Right lobe of liver (tissue), 6 donors: ENCODE measurements at regions of chr22 and their contacts with region 1.

Region 1: GRCh38 chr22:46090036-46090591 is 60.2 kb upstream of the PPARA start:
- DNase-seq: peak; percentile 70 to 85 (median 84)
- ATAC-seq: peak; percentile 30 to 55 (median 36)
- H3K4me3 ChIP-seq: no peak overlapping the region
- H3K27ac ChIP-seq: peak overlapping the region; percentile 79 to 87 (median 81)
- H3K4me1 ChIP-seq: peaks cover 0 to 56% (median 31%) of the 10 kb centered on the region in 4 donors
- H3K27me3 ChIP-seq: no peaks in the 10 kb centered on the region
- CTCF ChIP-seq: no peak
- POLR2A ChIP-seq: no peak

Region 2: GRCh38 chr22:46027192-46028105 is 62.7 kb before region 1 on chr22:
- intact Hi-C with region 1: loop called in 1 of 2 experiments (anchors 10 kb)
- DNase-seq: peak; percentile 80 to 85 (median 85)
- ATAC-seq: peak; percentile 86 to 95 (median 88)
- H3K4me3 ChIP-seq: peak overlapping the region; percentile 30 to 58 (median 49)
- H3K27ac ChIP-seq: peak overlapping the region; percentile 20 to 62 (median 60)
- H3K4me1 ChIP-seq: peaks cover 0 to 25% (median 3%) of the 10 kb centered on the region in 4 donors
- H3K27me3 ChIP-seq: no peaks in the 10 kb centered on the region
- CTCF ChIP-seq: peak in 3 of 4 donors; percentile 33 to 55 (median 42)
- POLR2A ChIP-seq: peak; percentile 55